HCT116 (cell line): ENCODE measurements at regions of chr17 and their contacts with region 1.

Region 1: GRCh38 chr17:35088881-35089585 is 25.5 kb upstream of the RFFL start:
- DNase-seq: peak; percentile 57
- ATAC-seq: peak; percentile 77
- H3K4me3 ChIP-seq: peak overlapping the region; percentile 68 to 93
- H3K27ac ChIP-seq: peak overlapping the region; percentile 96
- H3K4me1 ChIP-seq: peaks cover 36 to 54% of the 10 kb centered on the region in 2 experiments
- H3K27me3 ChIP-seq: no peaks in the 10 kb centered on the region
- CTCF ChIP-seq: peak; percentile 56 to 82 (median 81)
- POLR2A ChIP-seq: no peak
- RAD21 ChIP-seq: peak; percentile 61

Region 2: GRCh38 chr17:34998205-34998604 is 90.8 kb before region 1 on chr17:
- CTCF ChIA-PET with region 1: no interaction called
- POLR2A ChIA-PET with region 1: no interaction called
- RAD21 ChIA-PET with region 1: no interaction called
- intact Hi-C with region 1: loop called (anchors 1 kb)
- DNase-seq: peak; percentile 38
- ATAC-seq: peak; percentile 97
- H3K4me3 ChIP-seq: no peak overlapping the region
- H3K27ac ChIP-seq: no peak overlapping the region
- H3K4me1 ChIP-seq: no peaks in the 10 kb centered on the region
- H3K27me3 ChIP-seq: no peaks in the 10 kb centered on the region
- CTCF ChIP-seq: peak; percentile 84 to 93 (median 87)
- POLR2A ChIP-seq: no peak
- RAD21 ChIP-seq: peak; percentile 95

Region 3: GRCh38 chr17:35063514-35064223 is 25.4 kb before region 1 on chr17 and contains the start of gene RFFL:
- CTCF ChIA-PET with region 1: interaction called, 11 read pairs
- POLR2A ChIA-PET with region 1: interaction called, 5 read pairs
- RAD21 ChIA-PET with region 1: no interaction called
- intact Hi-C with region 1: loop called (anchors 2 kb)
- DNase-seq: peak; percentile 91
- ATAC-seq: peak; percentile 97
- H3K4me3 ChIP-seq: peak within 1 kb of the TSS in 1 of 2 experiments; percentile 32; a peak in 2 of 4 replicates
- H3K27ac ChIP-seq: peak within 1 kb of the TSS; percentile 92
- H3K4me1 ChIP-seq: peaks cover 31 to 47% of the 10 kb centered on the region in 2 experiments
- H3K27me3 ChIP-seq: no peaks in the 10 kb centered on the region
- CTCF ChIP-seq: no peak
- POLR2A ChIP-seq: no peak
- RAD21 ChIP-seq: peak; percentile 50
- total RNA-seq, gene RFFL: 40.3 TPM

Region 4: GRCh38 chr17:35514564-35514963 is 425.5 kb after region 1 on chr17:
- CTCF ChIA-PET with region 1: no interaction called
- POLR2A ChIA-PET with region 1: no interaction called
- RAD21 ChIA-PET with region 1: no interaction called
- intact Hi-C with region 1: no loop called
- DNase-seq: no peak
- ATAC-seq: no peak
- H3K4me3 ChIP-seq: no peak overlapping the region
- H3K27ac ChIP-seq: no peak overlapping the region
- H3K4me1 ChIP-seq: no peaks in the 10 kb centered on the region; a peak in 1 of 4 replicates
- H3K27me3 ChIP-seq: peaks cover 40% of the 10 kb centered on the region
- CTCF ChIP-seq: no peak
- POLR2A ChIP-seq: no peak
- RAD21 ChIP-seq: no peak